Naive thymus-derived CD8-positive, alpha-beta T cell (primary cell): ENCODE measurements at regions of chr3 and their contacts with region 1.

Region 1: DNA sequence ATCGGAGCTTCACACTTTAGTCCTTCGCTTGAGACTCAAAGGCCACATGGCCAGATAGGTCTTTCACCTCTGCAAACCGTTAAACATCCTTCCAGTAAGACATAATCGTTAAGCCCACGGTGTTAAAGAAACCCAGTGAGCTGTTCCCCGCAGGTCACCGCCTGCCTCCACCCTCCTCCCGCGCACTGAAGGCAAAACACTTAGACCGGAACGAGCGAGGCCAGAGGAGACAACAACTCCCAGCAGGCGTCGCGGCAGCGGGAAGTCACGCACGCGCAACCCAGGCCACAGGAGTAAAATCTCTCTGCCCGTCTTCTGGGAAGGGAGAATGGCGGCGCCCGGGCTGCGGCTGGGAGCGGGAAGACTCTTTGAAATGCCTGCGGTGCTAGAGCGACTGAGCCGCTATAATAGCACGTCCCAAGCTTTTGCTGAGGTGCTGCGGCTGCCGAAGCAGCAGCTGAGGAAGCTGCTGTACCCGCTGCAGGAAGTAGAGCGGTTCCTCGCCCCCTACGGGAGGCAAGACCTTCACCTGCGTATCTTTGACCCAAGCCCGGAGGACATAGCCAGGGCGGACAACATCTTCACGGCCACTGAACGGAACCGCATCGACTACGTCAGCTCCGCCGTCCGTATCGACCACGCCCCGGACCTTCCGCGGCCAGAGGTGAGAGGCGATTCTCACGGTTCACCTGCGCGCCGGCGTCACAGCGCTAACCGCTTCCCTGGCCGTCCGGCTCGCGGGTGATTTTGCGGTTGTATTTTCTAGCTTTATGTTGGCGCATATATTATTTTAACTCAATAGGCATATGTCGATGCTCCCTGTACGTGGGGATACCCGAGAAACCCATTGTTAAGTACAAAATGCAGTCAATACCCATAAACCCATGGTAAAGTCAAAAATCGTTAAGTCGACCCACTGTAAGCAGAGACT is at the start of gene GTPBP8:
- DNase-seq: peak; percentile 67 to 87 (median 78)
- ATAC-seq: peak; percentile 90 to 93
- H3K4me3 Mint-ChIP-seq: peak within 1 kb of the TSS; percentile 87 to 98 (median 94)
- H3K27ac Mint-ChIP-seq: peak within 1 kb of the TSS; percentile 90 to 98 (median 96)
- H3K4me1 Mint-ChIP-seq: peaks cover 22 to 52% (median 49%) of the 10 kb centered on the region in 4 donors
- H3K27me3 Mint-ChIP-seq: no peaks in the 10 kb centered on the region
- polyA plus RNA-seq, gene GTPBP8: 22.8 to 26.4 (median 25.9) TPM

Region 2: GRCh38 chr3:112974894-112975293 is 16.0 kb before region 1 on chr3 and contains the start of gene CD200R1:
- POLR2A ChIA-PET with region 1: interaction called, 10 read pairs
- DNase-seq: peak in 3 of 10 donors; percentile 36 to 40 (median 38)
- ATAC-seq: peak; percentile 42 to 54
- H3K4me3 Mint-ChIP-seq: peak within 1 kb of the TSS; percentile 85 to 98 (median 94)
- H3K27ac Mint-ChIP-seq: peak within 1 kb of the TSS; percentile 92 to 100 (median 96)
- H3K4me1 Mint-ChIP-seq: peaks cover 42 to 87% (median 77%) of the 10 kb centered on the region in 4 donors
- H3K27me3 Mint-ChIP-seq: no peaks in the 10 kb centered on the region
- polyA plus RNA-seq, gene CD200R1: 6.4 to 11.0 (median 7.7) TPM

Region 3: DNA sequence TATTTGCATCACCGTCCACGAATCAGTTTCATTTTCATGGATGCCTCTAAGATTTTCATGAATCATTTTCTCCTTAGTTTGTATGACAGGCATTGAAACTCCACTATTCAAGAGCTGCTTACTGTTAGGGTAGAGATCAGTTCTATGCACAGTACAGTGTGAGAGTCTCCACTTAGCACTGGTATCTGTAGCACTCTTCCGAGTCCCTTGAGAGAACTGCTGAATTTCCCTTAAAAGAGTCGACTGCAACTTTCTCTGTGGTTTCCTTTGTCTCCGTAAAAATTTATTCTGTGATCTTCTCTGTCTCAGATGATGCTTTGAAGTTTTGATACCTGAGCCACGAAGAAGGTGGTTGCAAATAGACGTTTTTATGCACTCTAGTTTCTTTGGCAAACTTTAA is 14.7 kb after region 1 on chr3:
- POLR2A ChIA-PET with region 1: interaction called, 12 read pairs
- DNase-seq: peak in 5 of 10 donors; percentile 18 to 81 (median 61)
- ATAC-seq: peak; percentile 89 to 90
- H3K4me3 Mint-ChIP-seq: peak overlapping the region; percentile 57 to 87 (median 78)
- H3K27ac Mint-ChIP-seq: peak overlapping the region; percentile 89 to 98 (median 95)
- H3K4me1 Mint-ChIP-seq: peaks cover 34 to 84% (median 74%) of the 10 kb centered on the region in 4 donors
- H3K27me3 Mint-ChIP-seq: no peaks in the 10 kb centered on the region

Region 4: GRCh38 chr3:113019182-113020137 is 28.5 kb after region 1 on chr3:
- POLR2A ChIA-PET with region 1: interaction called, 25 read pairs
- DNase-seq: peak; percentile 65 to 85 (median 76)
- ATAC-seq: peak; percentile 84 to 87
- H3K4me3 Mint-ChIP-seq: peak overlapping the region; percentile 92 to 97 (median 94)
- H3K27ac Mint-ChIP-seq: peak overlapping the region; percentile 88 to 99 (median 96)
- H3K4me1 Mint-ChIP-seq: peaks cover 35 to 67% (median 60%) of the 10 kb centered on the region in 4 donors
- H3K27me3 Mint-ChIP-seq: no peaks in the 10 kb centered on the region